H1 (cell line): ENCODE measurements at regions of chr1 and their contacts with region 1.

Region 1: DNA sequence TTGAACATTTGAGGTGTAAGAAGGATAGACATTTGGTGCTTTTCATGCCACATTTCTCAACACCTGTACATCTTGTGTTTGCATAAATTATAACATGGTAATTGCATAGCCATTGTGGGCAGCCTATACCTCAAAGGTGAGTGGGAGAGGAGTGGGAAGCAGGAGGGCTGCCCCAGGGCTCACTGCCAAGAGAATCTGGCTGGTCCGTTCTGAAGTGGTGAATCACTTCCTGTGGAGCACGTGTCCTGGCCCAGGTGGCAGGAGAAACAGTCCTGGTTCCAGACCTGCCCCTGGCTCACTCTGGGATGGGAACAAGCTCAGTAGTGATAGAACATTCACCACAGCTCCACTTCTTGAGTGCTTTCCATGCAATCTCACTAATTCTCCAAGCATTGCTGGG is 11.6 kb upstream of the OLFML2B start:
- DNase-seq: no peak
- H3K4me3 ChIP-seq: no peak overlapping the region
- H3K27ac ChIP-seq: no peak overlapping the region
- H3K4me1 ChIP-seq: no peaks in the 10 kb centered on the region; a peak in 1 of 7 replicates
- H3K27me3 ChIP-seq: no peaks in the 10 kb centered on the region
- CTCF ChIP-seq: no peak
- EP300 ChIP-seq: no peak
- POLR2A ChIP-seq: no peak
- RAD21 ChIP-seq: no peak

Region 2: GRCh38 chr1:161792740-161793139 is 242.5 kb before region 1 on chr1:
- CTCF ChIA-PET with region 1: interaction called, 180 read pairs
- POLR2A ChIA-PET with region 1: interaction called, 7 read pairs
- DNase-seq: no peak
- H3K4me3 ChIP-seq: no peak overlapping the region
- H3K27ac ChIP-seq: no peak overlapping the region
- H3K4me1 ChIP-seq: no peaks in the 10 kb centered on the region
- H3K27me3 ChIP-seq: peaks cover 0 to 1% (median 0%) of the 10 kb centered on the region in 4 experiments; a peak in 1 of 7 replicates
- CTCF ChIP-seq: peak in 2 of 3 experiments; percentile 44 to 58; a peak in 2 of 4 replicates
- EP300 ChIP-seq: no peak
- POLR2A ChIP-seq: no peak
- RAD21 ChIP-seq: peak; percentile 79 to 82

Region 3: GRCh38 chr1:161864577-161864976 is 170.7 kb before region 1 on chr1:
- CTCF ChIA-PET with region 1: interaction called, 14 read pairs
- POLR2A ChIA-PET with region 1: no interaction called
- DNase-seq: no peak
- H3K4me3 ChIP-seq: no peak overlapping the region
- H3K27ac ChIP-seq: no peak overlapping the region
- H3K4me1 ChIP-seq: no peaks in the 10 kb centered on the region
- H3K27me3 ChIP-seq: no peaks in the 10 kb centered on the region
- CTCF ChIP-seq: peak in 1 of 3 experiments; percentile 10; a peak in 1 of 4 replicates
- EP300 ChIP-seq: no peak
- POLR2A ChIP-seq: no peak
- RAD21 ChIP-seq: peak; percentile 27 to 30; a peak in 2 of 4 replicates

Region 4: GRCh38 chr1:161905269-161905884 is 129.9 kb before region 1 on chr1:
- CTCF ChIA-PET with region 1: interaction called, 18 read pairs
- POLR2A ChIA-PET with region 1: no interaction called
- DNase-seq: no peak
- H3K4me3 ChIP-seq: no peak overlapping the region
- H3K27ac ChIP-seq: no peak overlapping the region
- H3K4me1 ChIP-seq: no peaks in the 10 kb centered on the region
- H3K27me3 ChIP-seq: no peaks in the 10 kb centered on the region
- CTCF ChIP-seq: peak in 2 of 3 experiments; percentile 55 to 58; a peak in 3 of 4 replicates
- EP300 ChIP-seq: no peak
- POLR2A ChIP-seq: no peak
- RAD21 ChIP-seq: peak; percentile 41 to 55

Region 5: DNA sequence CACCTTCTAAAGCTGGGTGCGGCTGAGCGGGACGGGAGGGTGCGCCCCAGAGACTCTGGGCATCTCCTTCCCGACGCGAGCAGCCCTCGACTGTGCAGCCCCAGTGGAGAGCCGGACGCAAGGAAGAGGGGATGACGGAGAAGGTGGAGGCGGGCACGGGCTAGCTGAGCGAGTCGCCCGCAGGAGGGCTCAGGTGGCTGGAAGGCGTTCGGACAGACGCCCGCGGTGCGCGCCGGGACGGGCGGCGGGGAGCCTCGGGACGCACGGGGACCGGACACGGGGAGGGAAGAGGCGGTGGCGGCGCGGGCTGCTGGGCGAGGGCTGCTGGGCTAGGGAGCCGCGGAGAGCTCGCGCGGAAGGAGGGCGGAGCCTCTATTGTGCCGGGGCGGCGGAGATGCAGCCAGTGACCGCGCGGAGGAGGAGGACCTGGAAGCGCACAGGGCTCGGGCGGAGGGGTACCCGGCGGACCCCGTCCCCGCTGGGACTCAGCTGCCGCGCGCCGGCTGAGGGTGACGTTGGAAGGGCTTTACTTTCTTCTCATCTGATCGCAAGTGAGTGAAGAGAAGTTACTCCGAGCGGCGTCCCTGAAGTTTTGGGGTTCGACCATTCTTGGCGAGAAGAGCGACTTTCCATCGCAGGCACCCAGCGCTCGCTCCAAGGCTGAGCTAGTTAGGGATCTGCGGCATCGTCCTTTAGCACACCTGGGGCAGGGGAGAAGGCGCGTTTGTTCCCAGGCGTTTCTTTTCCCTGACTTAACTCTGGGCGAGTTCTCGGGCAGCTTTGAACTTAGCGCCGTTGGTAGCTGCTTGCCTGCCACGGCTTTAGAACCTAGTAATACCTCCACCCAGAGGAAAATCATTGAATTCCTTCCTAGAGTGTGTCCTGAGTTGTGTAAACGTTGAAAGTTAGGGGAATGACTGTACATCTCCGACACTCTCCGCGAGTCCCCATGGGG is 11.4 kb before region 1 on chr1 and contains the start of gene OLFML2B:
- CTCF ChIA-PET with region 1: interaction called, 22 read pairs
- POLR2A ChIA-PET with region 1: no interaction called
- DNase-seq: peak; percentile 13 to 88
- H3K4me3 ChIP-seq: peak within 1 kb of the TSS; percentile 59 to 81 (median 68)
- H3K27ac ChIP-seq: no peak within 1 kb of the TSS
- H3K4me1 ChIP-seq: peaks cover 4 to 11% (median 8%) of the 10 kb centered on the region in 4 experiments
- H3K27me3 ChIP-seq: peaks cover 1 to 30% (median 23%) of the 10 kb centered on the region in 4 experiments
- CTCF ChIP-seq: 0 out of 4 replicates have a peak, but pooled peaks of 1 of the 3 experiments have one; percentile 5
- EP300 ChIP-seq: no peak
- POLR2A ChIP-seq: peak in 1 of 2 experiments; percentile 59; a peak in 2 of 3 replicates
- RAD21 ChIP-seq: peak; percentile 25 to 39; a peak in 3 of 4 replicates
- total RNA-seq, gene OLFML2B: 8.4 and 10.4 TPM in 2 replicates

Region 6: GRCh38 chr1:162046921-162047320 is 11.7 kb after region 1 on chr1:
- CTCF ChIA-PET with region 1: interaction called, 11 read pairs
- POLR2A ChIA-PET with region 1: no interaction called
- DNase-seq: no peak
- H3K4me3 ChIP-seq: no peak overlapping the region
- H3K27ac ChIP-seq: no peak overlapping the region
- H3K4me1 ChIP-seq: no peaks in the 10 kb centered on the region
- H3K27me3 ChIP-seq: no peaks in the 10 kb centered on the region
- CTCF ChIP-seq: no peak
- EP300 ChIP-seq: no peak
- POLR2A ChIP-seq: no peak
- RAD21 ChIP-seq: no peak